Ascending aorta (tissue), 2 donors: ENCODE measurements at regions of chr10 and their contacts with region 1.

Region 1: GRCh38 chr10:122044045-122044661 is 55.2 kb downstream of the TACC2 start:
- DNase-seq: peak in 1 of 2 donors; percentile 81
- H3K4me3 ChIP-seq: peak overlapping the region in 1 of 2 donors; percentile 38
- H3K27ac ChIP-seq: peak overlapping the region; percentile 58 to 72
- H3K4me1 ChIP-seq: peaks cover 0 to 20% of the 10 kb centered on the region in 2 donors
- H3K27me3 ChIP-seq: no peaks in the 10 kb centered on the region
- CTCF ChIP-seq: no peak

Region 2: DNA sequence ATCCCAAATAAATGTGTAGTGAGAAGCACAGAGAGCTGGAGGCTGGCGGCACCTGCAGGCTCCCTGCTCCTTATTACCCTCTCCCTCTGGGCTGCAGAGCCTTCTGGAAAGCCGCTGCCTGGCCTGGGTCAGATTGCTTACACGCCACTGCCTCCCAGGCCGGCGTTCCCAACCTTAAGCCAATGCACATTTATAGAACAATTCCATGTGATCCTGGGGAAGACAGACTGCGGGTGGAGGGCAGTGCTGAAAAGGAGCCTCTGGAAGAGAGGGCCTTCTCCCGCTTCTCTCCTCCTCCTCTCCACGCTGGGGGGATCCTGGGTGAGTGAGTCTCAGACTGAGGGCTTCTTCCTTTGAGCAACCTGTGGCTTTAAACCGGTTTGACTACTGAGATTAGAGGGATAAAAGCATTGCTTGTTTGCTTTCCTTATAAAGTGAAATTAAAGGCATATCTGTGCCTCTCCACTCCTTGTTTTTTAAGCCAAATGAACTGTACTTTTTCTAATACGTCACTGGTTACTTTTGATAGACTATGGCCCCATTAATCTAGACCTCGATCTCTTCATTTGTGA is 49.7 kb before region 1 on chr10:
- intact Hi-C with region 1: loop called (anchors 2 kb)
- DNase-seq: peak in 1 of 2 donors; percentile 80
- H3K4me3 ChIP-seq: peak overlapping the region in 1 of 2 donors; percentile 55
- H3K27ac ChIP-seq: peak overlapping the region; percentile 83 to 90
- H3K4me1 ChIP-seq: peaks cover 4 to 30% of the 10 kb centered on the region in 2 donors
- H3K27me3 ChIP-seq: no peaks in the 10 kb centered on the region
- CTCF ChIP-seq: peak in 1 of 3 experiments; percentile 24

Region 3: DNA sequence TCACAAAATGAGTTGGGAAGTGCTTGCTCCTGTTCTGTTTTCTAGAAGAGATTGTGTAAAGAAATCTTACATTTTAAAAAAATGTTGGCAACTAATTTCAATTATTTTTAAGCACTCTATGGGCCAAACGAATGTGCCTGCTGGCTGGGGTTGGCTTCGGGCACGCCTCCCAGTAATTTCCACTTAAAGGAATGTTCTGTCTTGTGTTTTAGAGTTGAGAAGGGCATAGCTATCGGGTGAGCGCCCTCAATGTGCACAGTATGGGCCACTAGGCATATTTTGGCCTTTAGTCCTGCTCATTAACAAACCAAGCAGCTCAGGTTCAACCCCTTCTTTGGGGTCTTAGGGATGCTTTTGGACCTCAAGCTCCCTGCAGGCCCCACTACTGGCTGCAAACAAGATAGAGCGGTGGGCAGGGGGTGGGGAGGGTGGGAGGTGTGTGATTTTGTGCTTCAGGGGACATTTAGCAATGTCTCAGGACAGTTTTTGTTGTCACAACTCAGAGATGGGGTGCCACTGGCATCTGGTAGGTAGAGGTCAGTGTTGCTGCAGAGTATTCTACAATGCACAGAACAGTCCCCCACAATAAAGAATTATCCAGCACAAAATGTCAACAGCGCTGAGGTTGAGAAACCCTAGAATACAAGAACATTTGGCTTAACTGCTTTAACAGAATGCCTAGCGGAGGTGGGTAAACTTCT is 14.5 kb before region 1 on chr10:
- intact Hi-C with region 1: loop called (anchors 2 kb)
- DNase-seq: peak in 1 of 2 donors; percentile 83
- H3K4me3 ChIP-seq: peak overlapping the region in 1 of 2 donors; percentile 33
- H3K27ac ChIP-seq: peak overlapping the region; percentile 66 to 74
- H3K4me1 ChIP-seq: peaks cover 0 to 14% of the 10 kb centered on the region in 2 donors
- H3K27me3 ChIP-seq: no peaks in the 10 kb centered on the region
- CTCF ChIP-seq: peak in 1 of 3 experiments; percentile 7

Region 4: DNA sequence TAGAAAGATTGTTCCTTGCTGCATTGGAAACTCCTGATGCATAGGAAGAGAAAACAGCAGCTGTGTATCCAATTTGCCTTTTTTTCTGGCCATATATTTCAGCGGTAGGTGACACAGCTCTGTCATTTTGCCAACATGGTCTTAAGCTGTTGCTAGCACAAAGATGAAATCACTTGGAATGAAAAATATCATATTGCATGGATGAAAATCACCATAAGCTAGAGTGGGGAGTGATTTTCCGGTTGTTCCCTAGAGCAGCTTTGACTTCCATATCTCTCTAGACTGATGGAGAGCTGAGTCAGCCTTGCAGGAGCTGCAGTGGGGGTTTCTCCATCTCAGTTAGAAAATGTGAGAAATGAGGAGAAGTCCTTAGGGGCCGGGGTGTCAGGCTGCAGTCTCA is 188.6 kb after region 1 on chr10:
- intact Hi-C with region 1: no loop called
- DNase-seq: no peak
- H3K4me3 ChIP-seq: no peak overlapping the region
- H3K27ac ChIP-seq: no peak overlapping the region
- H3K4me1 ChIP-seq: no peaks in the 10 kb centered on the region
- H3K27me3 ChIP-seq: no peaks in the 10 kb centered on the region
- CTCF ChIP-seq: no peak

Region 5: GRCh38 chr10:122258136-122259074 is 214.3 kb after region 1 on chr10:
- intact Hi-C with region 1: no loop called
- DNase-seq: no peak
- H3K4me3 ChIP-seq: no peak overlapping the region
- H3K27ac ChIP-seq: no peak overlapping the region
- H3K4me1 ChIP-seq: no peaks in the 10 kb centered on the region
- H3K27me3 ChIP-seq: no peaks in the 10 kb centered on the region
- CTCF ChIP-seq: no peak